ENCODE measurements at regions of chrX and their contacts with region 1.

Region 1: GRCh38 chrX:51894697-51895336 is 1.4 kb downstream of the MAGED1 start:
- DNase-seq: no peak
- H3K4me3 ChIP-seq: peak overlapping the region; percentile 78
- H3K27me3 ChIP-seq: no peaks in the 10 kb centered on the region
- CTCF ChIP-seq: 0 out of 2 replicates have a peak, but pooled peaks have one; percentile 11

Region 2: DNA sequence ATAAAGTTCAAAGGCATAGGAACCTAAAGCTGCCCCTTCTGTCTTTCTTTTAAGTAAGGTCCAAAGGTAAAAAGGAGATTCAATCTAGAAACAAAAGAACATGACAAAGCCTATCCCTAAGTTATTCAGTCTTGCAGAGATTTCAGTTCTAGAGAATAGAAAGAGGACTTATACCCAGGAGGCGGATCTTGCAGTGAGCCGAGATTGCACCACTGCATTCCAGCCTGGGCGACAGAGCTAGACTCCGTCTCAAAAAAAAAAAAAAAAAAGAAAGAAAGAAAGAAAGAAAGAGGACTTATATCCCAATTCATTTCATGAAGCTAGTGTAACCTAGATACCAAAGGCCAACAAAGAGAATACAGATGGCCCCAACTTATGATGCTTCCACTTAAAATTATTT is 962.9 kb after region 1 on chrX:
- CTCF ChIA-PET with region 1: no interaction called
- POLR2A ChIA-PET with region 1: interaction called, 12 read pairs
- DNase-seq: no peak
- H3K4me3 ChIP-seq: no peak overlapping the region
- H3K27me3 ChIP-seq: no peaks in the 10 kb centered on the region
- CTCF ChIP-seq: no peak